Heart right ventricle (tissue), 16 donors: ENCODE measurements at regions of chr14 and their contacts with region 1.

Region 1: GRCh38 chr14:88492272-88493089 is 62.3 kb downstream of the PTPN21 start:
- DNase-seq: peak in 1 of 2 donors; percentile 80
- ATAC-seq: peak; percentile 53 to 85 (median 78)
- H3K4me3 ChIP-seq: no peak overlapping the region
- H3K27ac ChIP-seq: peak overlapping the region in 7 of 10 donors; percentile 14 to 63 (median 53)
- H3K4me1 ChIP-seq: peaks cover 0 to 21% (median 11%) of the 10 kb centered on the region in 9 donors
- H3K27me3 ChIP-seq: no peaks in the 10 kb centered on the region
- CTCF ChIP-seq: peak; percentile 86 to 96 (median 93)

Region 2: GRCh38 chr14:88516861-88517357 is 24.4 kb after region 1 on chr14:
- intact Hi-C with region 1: loop called in 1 of 10 experiments (anchors 1 kb)
- DNase-seq: no peak
- ATAC-seq: no peak
- H3K4me3 ChIP-seq: no peak overlapping the region
- H3K27ac ChIP-seq: peak overlapping the region in 3 of 10 donors; percentile 15 to 31 (median 27)
- H3K4me1 ChIP-seq: peaks cover 3 to 30% (median 9%) of the 10 kb centered on the region in 9 donors
- H3K27me3 ChIP-seq: no peaks in the 10 kb centered on the region
- CTCF ChIP-seq: no peak

Region 3: GRCh38 chr14:88551094-88551870 is 58.8 kb after region 1 on chr14:
- intact Hi-C with region 1: loop called in 4 of 10 experiments (anchors 2 to 10 kb)
- DNase-seq: peak; percentile 81 to 87
- ATAC-seq: peak; percentile 72 to 91 (median 84)
- H3K4me3 ChIP-seq: peak overlapping the region; percentile 16 to 90 (median 78)
- H3K27ac ChIP-seq: peak overlapping the region; percentile 26 to 82 (median 76)
- H3K4me1 ChIP-seq: peaks cover 3 to 86% (median 54%) of the 10 kb centered on the region in 9 donors
- H3K27me3 ChIP-seq: peaks cover 0 to 55% (median 0%) of the 10 kb centered on the region in 7 donors
- CTCF ChIP-seq: peak in 7 of 9 donors; percentile 20 to 64 (median 47)